Mammary epithelial cell (primary cell): ENCODE measurements at regions of chr6 and their contacts with region 1.

Region 1: GRCh38 chr6:151155095-151155494 is 84.7 kb upstream of the AKAP12 start:
- DNase-seq: no peak
- H3K4me3 ChIP-seq: no peak overlapping the region
- H3K27ac ChIP-seq: no peak overlapping the region
- H3K4me1 ChIP-seq: no peaks in the 10 kb centered on the region
- H3K27me3 ChIP-seq: no peaks in the 10 kb centered on the region
- CTCF ChIP-seq: no peak

Region 2: GRCh38 chr6:150491131-150491810 is 663.8 kb before region 1 on chr6:
- CTCF ChIA-PET with region 1: no interaction called
- dilution Hi-C with region 1: no loop called
- in situ Hi-C with region 1: no loop called
- intact Hi-C with region 1: no loop called
- DNase-seq: peak; percentile 93
- H3K4me3 ChIP-seq: no peak overlapping the region
- H3K27ac ChIP-seq: peak overlapping the region; percentile 92
- H3K4me1 ChIP-seq: peaks cover 39% of the 10 kb centered on the region
- H3K27me3 ChIP-seq: no peaks in the 10 kb centered on the region
- CTCF ChIP-seq: no peak

Region 3: GRCh38 chr6:151098166-151098565 is 56.9 kb before region 1 on chr6:
- CTCF ChIA-PET with region 1: no interaction called
- dilution Hi-C with region 1: loop called (anchors 5 kb)
- in situ Hi-C with region 1: no loop called
- intact Hi-C with region 1: no loop called
- DNase-seq: no peak
- H3K4me3 ChIP-seq: no peak overlapping the region
- H3K27ac ChIP-seq: no peak overlapping the region
- H3K4me1 ChIP-seq: no peaks in the 10 kb centered on the region
- H3K27me3 ChIP-seq: no peaks in the 10 kb centered on the region
- CTCF ChIP-seq: no peak

Region 4: DNA sequence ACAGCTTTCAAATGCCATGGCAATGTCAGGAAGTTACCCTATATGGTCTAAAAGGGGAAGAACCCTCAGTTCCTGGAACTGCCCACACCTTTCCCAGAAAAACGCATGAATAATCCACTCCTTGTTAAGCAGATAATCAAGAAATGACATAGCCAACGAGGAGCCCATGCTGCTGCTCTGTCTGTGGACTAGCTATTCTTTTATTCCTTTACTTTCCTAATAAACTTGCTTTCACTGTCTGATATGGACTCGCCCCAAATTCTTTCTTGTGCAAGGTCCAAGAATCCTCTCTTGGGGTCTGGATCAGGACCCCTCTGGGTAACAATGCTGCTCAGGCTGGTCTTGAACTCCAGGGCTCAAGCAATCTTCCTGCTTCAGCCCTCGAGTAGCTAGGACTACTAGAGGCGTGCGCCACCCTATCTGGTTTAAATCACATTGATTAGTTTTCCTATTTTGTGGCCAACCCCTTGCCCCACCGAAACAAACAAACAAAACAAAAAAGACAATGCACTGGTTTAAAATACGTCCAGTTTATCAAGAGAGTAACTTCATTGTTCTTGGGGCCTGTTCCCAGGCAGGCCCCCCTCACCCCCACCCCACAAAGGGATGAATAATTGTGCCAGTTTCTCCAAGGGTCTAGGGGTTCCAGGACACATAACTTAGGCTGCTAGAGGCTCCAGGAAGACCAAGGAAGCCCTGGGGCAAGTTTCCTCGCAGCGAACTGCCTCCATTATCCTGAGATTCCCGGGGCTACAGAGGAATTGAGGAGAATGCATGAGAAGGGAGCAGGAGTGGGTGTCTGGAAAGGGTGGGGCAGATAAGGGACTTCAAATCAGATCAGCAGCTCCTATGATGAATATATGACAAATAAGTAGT is 74.5 kb after region 1 on chr6:
- CTCF ChIA-PET with region 1: no interaction called
- dilution Hi-C with region 1: loop called (anchors 5 kb)
- in situ Hi-C with region 1: no loop called
- intact Hi-C with region 1: no loop called
- DNase-seq: no peak
- H3K4me3 ChIP-seq: no peak overlapping the region
- H3K27ac ChIP-seq: no peak overlapping the region
- H3K4me1 ChIP-seq: no peaks in the 10 kb centered on the region
- H3K27me3 ChIP-seq: no peaks in the 10 kb centered on the region
- CTCF ChIP-seq: no peak